ENCODE measurements at regions of chr14 and their contacts with region 1.

Region 1: GRCh38 chr14:72714094-72714493 is 179.8 kb downstream of the DPF3 start:
- DNase-seq: no peak
- ATAC-seq: no peak
- H3K4me3 ChIP-seq: no peak overlapping the region
- H3K27ac ChIP-seq: no peak overlapping the region
- H3K4me1 ChIP-seq: no peaks in the 10 kb centered on the region
- H3K27me3 ChIP-seq: no peaks in the 10 kb centered on the region; the same call in 1 of the 2 replicates
- CTCF ChIP-seq: no peak

Region 2: DNA sequence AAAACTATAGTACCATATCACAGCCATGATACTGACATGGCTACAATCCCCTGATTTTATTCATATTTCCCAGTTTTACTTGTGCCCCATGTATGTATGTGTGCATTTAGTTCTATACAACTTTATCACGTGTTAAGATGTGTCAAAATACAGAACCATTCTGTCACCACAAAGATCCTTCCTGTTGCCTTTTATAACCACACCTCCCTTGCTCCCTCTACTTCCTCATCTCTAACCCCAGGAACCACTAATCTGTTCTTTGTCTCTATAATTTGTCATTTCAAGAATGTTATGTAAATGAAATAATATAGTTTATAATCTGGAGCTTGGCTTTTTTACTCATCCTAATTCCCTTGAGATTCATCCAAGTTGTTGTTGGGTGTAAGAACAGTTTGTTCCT is 178.6 kb before region 1 on chr14:
- CTCF ChIA-PET with region 1: no interaction called
- POLR2A ChIA-PET with region 1: interaction called, 15 read pairs
- in situ Hi-C with region 1: no loop called
- intact Hi-C with region 1: no loop called
- DNase-seq: no peak
- ATAC-seq: no peak
- H3K4me3 ChIP-seq: no peak overlapping the region
- H3K27ac ChIP-seq: no peak overlapping the region
- H3K4me1 ChIP-seq: no peaks in the 10 kb centered on the region
- H3K27me3 ChIP-seq: no peaks in the 10 kb centered on the region; the same call in 1 of the 2 replicates
- CTCF ChIP-seq: no peak

Region 3: GRCh38 chr14:72662213-72662970 is 51.7 kb before region 1 on chr14:
- CTCF ChIA-PET with region 1: interaction called, 12 read pairs
- POLR2A ChIA-PET with region 1: no interaction called
- in situ Hi-C with region 1: no loop called
- intact Hi-C with region 1: no loop called
- DNase-seq: no peak
- ATAC-seq: no peak
- H3K4me3 ChIP-seq: no peak overlapping the region
- H3K27ac ChIP-seq: no peak overlapping the region
- H3K4me1 ChIP-seq: no peaks in the 10 kb centered on the region
- H3K27me3 ChIP-seq: no peaks in the 10 kb centered on the region
- CTCF ChIP-seq: no peak

Measured in Panc1 (cell line).